CD8-positive, alpha-beta T cell (primary cell): ENCODE measurements at regions of chr6 and their contacts with region 1.

Region 1: GRCh38 chr6:80106418-80107235 is at the start of gene BCKDHB:
- DNase-seq: peak; percentile 95 to 99 (median 97)
- ATAC-seq: peak; percentile 97
- H3K4me3 ChIP-seq: peak within 1 kb of the TSS; percentile 71 to 81
- H3K4me3 Mint-ChIP-seq: peak within 1 kb of the TSS; percentile 93
- H3K27ac ChIP-seq: peak within 1 kb of the TSS; percentile 39 to 67
- H3K27ac Mint-ChIP-seq: peak within 1 kb of the TSS; percentile 91
- H3K4me1 ChIP-seq: peaks cover 15% of the 10 kb centered on the region
- H3K4me1 Mint-ChIP-seq: peaks cover 25% of the 10 kb centered on the region
- H3K27me3 ChIP-seq: no peaks in the 10 kb centered on the region
- H3K27me3 Mint-ChIP-seq: no peaks in the 10 kb centered on the region
- CTCF ChIP-seq: no peak
- total RNA-seq, gene BCKDHB: 8.2 to 8.3 TPM

Region 2: GRCh38 chr6:79233611-79234149 is 872.9 kb before region 1 on chr6:
- CTCF ChIA-PET with region 1: no interaction called
- POLR2A ChIA-PET with region 1: no interaction called
- intact Hi-C with region 1: loop called (anchors 2 to 10 kb)
- DNase-seq: peak; percentile 14 to 80 (median 62)
- ATAC-seq: peak; percentile 44
- H3K4me3 ChIP-seq: peak overlapping the region; percentile 66 to 98
- H3K4me3 Mint-ChIP-seq: peak overlapping the region; percentile 99
- H3K27ac ChIP-seq: peak overlapping the region; percentile 46 to 66
- H3K27ac Mint-ChIP-seq: peak overlapping the region; percentile 84
- H3K4me1 ChIP-seq: peaks cover 7% of the 10 kb centered on the region
- H3K4me1 Mint-ChIP-seq: peaks cover 33% of the 10 kb centered on the region
- H3K27me3 ChIP-seq: no peaks in the 10 kb centered on the region
- H3K27me3 Mint-ChIP-seq: no peaks in the 10 kb centered on the region
- CTCF ChIP-seq: no peak

Region 3: GRCh38 chr6:79777713-79778579 is 328.7 kb before region 1 on chr6:
- CTCF ChIA-PET with region 1: no interaction called
- POLR2A ChIA-PET with region 1: no interaction called
- intact Hi-C with region 1: loop called in 1 of 2 experiments (anchors 5 kb)
- DNase-seq: peak; percentile 65 to 90 (median 82)
- ATAC-seq: peak; percentile 97
- H3K4me3 ChIP-seq: peak overlapping the region; percentile 36 to 38
- H3K4me3 Mint-ChIP-seq: peak overlapping the region; percentile 78
- H3K27ac ChIP-seq: no peak overlapping the region
- H3K27ac Mint-ChIP-seq: no peak overlapping the region
- H3K4me1 ChIP-seq: peaks cover 4% of the 10 kb centered on the region
- H3K4me1 Mint-ChIP-seq: peaks cover 6% of the 10 kb centered on the region
- H3K27me3 ChIP-seq: no peaks in the 10 kb centered on the region
- H3K27me3 Mint-ChIP-seq: peaks cover 2% of the 10 kb centered on the region
- CTCF ChIP-seq: peak; percentile 94

Region 4: DNA sequence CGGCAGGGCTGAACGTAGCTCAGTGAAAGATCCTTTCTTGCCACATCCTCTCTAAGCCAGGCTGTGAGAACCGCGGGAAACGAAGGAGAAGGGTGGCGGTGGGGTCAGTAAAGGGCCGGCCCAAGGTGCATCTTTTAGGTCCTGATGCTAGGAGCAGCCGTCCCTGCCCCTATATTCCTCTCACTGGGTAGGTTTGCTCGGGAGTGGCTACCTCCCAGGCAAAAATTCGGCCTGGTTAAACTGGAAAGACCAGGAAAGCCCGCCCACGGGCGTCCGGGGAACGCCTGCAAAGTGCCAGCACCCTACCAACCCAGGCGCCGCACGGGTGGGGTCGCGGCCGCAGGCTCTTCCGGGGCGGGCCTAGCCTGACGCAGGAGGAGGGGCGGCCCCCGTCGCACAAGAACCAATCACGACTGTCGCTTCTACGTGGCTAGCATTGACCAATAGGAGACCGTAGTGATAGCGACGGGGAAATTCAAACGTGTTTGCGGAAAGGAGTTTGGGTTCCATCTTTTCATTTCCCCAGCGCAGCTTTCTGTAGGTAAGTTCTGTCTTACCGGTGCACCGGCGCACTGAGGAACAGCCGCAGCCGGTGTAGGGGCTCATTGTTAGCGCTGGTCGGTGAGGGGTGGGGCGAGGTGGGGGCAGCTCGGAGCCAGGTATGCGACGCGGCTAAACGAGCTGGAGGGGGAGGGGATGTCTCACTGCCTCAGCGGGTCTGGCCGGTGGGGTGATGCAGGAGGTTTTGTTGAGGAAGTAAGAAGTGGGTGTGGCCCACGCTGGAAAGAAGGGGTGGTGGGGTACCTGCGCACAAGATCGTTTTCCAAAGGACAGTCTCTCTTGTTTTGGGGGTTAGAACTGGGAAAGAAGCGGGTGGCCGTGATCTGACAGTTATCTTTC is 102.2 kb before region 1 on chr6 and contains the start of gene TTK:
- CTCF ChIA-PET with region 1: interaction called, 3 read pairs
- POLR2A ChIA-PET with region 1: interaction called, 16 read pairs
- intact Hi-C with region 1: loop called (anchors 1 to 2 kb)
- DNase-seq: peak; percentile 85 to 97 (median 90)
- ATAC-seq: peak; percentile 97
- H3K4me3 ChIP-seq: peak within 1 kb of the TSS; percentile 76 to 86
- H3K4me3 Mint-ChIP-seq: peak within 1 kb of the TSS; percentile 87
- H3K27ac ChIP-seq: peak within 1 kb of the TSS; percentile 84 to 95
- H3K27ac Mint-ChIP-seq: peak within 1 kb of the TSS; percentile 95
- H3K4me1 ChIP-seq: peaks cover 11% of the 10 kb centered on the region
- H3K4me1 Mint-ChIP-seq: peaks cover 24% of the 10 kb centered on the region
- H3K27me3 ChIP-seq: no peaks in the 10 kb centered on the region
- H3K27me3 Mint-ChIP-seq: peaks cover 5% of the 10 kb centered on the region
- CTCF ChIP-seq: no peak
- total RNA-seq, gene TTK: 0.30 to 0.97 TPM

Region 5: DNA sequence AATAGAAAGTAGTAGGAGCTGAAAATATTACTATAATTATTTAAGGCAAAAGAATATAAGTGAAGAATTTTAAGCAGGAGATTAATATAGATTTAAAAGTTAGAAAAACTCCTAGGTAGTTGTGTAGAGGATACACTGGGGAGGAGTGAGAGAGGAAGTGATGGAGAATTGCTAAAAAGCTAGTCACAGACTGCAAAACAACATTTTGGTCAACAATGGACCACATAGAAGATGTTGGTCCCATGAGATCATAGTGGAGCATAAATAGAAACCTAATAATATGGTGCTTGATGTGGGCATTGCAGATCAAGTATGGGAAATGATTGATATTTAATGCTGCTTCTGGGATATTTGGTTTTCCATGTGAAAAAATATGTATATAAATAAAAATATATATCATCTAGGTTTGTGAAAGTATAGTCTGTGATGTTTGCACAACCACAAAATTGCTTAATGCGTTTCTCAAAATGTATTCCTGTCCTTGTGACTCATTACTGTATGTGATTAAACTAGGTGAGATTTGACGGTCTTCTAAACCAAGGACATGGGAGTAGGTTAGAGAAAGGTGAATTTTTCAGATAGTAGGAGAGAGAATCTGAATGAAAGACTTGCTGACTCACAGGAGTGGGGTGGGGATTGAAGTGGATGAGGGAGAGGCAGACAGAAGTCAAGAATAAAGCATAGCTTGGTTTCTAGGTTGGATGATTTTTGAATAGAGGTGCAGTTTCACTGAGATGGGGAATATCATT is 173.8 kb after region 1 on chr6:
- CTCF ChIA-PET with region 1: no interaction called
- POLR2A ChIA-PET with region 1: no interaction called
- intact Hi-C with region 1: no loop called
- DNase-seq: no peak
- ATAC-seq: no peak
- H3K4me3 ChIP-seq: no peak overlapping the region
- H3K4me3 Mint-ChIP-seq: no peak overlapping the region
- H3K27ac ChIP-seq: no peak overlapping the region
- H3K27ac Mint-ChIP-seq: no peak overlapping the region
- H3K4me1 ChIP-seq: no peaks in the 10 kb centered on the region
- H3K4me1 Mint-ChIP-seq: no peaks in the 10 kb centered on the region
- H3K27me3 ChIP-seq: no peaks in the 10 kb centered on the region
- H3K27me3 Mint-ChIP-seq: no peaks in the 10 kb centered on the region
- CTCF ChIP-seq: no peak